ENCODE measurements at regions of chr21 and their contacts with region 1.

Region 1: DNA sequence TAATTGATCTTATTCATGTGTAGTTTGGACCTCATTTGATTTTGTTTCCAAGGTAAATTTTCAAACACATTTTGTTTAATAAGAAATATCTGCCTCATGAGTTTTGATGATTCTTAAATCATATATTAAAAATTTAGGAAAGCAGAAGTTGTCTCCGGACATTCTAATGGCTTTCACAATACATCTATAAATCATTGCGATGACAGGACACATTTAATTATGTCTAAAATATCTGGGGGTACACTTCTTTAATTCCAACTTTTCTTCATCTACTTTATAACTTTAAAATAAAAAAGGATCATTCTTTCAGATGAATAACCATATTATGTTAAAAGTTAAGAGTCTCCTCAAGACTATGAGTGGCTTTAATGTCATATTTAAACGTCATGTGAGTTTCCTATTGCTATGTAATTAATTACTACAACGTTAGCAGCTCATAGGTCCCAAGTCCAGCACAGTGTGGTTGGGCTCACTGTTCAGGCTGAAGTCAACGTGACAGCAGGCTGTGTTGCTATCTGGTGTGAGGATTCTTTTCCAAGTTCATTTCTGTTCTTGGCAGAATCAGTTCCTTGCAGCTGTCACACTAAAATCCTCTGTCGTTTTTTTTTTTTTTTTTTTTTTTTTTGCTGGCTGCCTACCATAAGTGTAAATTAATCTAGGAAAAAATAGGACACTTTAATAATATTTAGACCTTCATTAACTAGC is 893.5 kb downstream of the LTN1 start:
- DNase-seq: peak; percentile 53
- H3K4me3 ChIP-seq: no peak overlapping the region
- H3K27ac ChIP-seq: peak overlapping the region; percentile 75
- H3K4me1 ChIP-seq: peaks cover 27% of the 10 kb centered on the region
- H3K27me3 ChIP-seq: no peaks in the 10 kb centered on the region
- CTCF ChIP-seq: no peak

Region 2: GRCh38 chr21:28317177-28317950 is 218.2 kb after region 1 on chr21:
- intact Hi-C with region 1: loop called (anchors 10 kb)
- DNase-seq: no peak
- H3K4me3 ChIP-seq: no peak overlapping the region
- H3K27ac ChIP-seq: no peak overlapping the region
- H3K4me1 ChIP-seq: no peaks in the 10 kb centered on the region
- H3K27me3 ChIP-seq: no peaks in the 10 kb centered on the region
- CTCF ChIP-seq: no peak

Measured in left ventricle myocardium inferior (tissue), 1 donor.